Panc1 (cell line): ENCODE measurements at regions of chr18 and their contacts with region 1.

Region 1: DNA sequence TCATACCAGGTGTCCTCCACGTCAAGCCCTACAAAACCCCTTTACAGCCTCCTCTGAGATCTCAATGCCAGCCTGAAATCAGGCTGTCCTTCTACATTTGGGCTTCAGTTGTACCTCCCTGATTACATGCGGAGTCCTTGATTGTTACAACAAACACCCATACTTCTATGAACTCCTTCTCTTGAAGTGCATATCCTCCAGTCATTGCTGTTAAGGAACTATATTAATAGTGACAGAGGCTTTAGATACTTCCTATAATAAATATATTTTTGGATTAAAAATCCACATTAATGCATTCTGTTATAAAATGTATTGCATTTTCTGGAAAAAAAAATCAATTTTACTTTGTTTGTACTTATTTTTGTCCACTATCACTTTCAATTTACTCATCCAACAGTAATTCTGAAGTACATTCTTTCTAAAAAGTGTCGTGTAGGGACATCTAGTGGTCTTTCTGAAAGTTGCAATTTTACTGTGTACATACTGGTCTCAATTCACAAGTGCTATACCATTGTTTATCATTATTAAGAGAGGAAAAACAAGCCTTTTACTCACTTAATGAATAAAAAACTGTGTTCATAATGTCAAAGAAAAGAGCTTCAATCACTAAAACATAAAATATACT is 316.4 kb downstream of the DSEL start:
- DNase-seq: peak; percentile 53
- ATAC-seq: peak; percentile 83
- H3K4me3 ChIP-seq: no peak overlapping the region
- H3K27ac ChIP-seq: no peak overlapping the region
- H3K4me1 ChIP-seq: no peaks in the 10 kb centered on the region
- H3K27me3 ChIP-seq: no peaks in the 10 kb centered on the region
- CTCF ChIP-seq: peak; percentile 28; the same call in 1 of the 2 replicates

Region 2: DNA sequence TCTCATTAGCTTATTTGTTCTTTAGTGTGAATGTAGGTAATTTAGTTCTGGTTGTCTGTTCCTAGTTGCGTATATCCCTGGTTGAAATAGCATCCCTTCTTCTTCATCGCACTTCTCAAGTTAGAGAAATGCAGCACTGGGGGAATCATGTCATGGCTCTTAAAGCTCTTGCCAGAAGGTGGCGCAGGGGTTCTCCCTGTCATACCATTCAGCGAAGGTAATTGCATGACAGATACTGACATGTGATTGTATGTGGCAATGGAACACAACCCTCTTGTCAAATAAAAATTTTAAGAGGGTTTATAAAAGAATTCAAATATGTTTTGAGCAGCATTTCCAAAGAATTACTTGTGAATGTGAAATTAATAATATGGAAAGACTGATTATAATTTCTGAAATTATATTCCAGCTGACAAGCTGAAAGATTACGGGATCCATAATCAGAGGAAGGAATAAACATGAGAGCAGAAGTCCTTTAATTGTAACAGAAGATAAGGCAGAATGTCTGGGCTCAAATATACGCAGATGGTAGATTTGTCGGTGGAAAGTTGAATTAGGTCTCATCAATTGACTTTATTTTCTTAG is 95.3 kb before region 1 on chr18:
- CTCF ChIA-PET with region 1: no interaction called
- POLR2A ChIA-PET with region 1: no interaction called
- in situ Hi-C with region 1: no loop called
- intact Hi-C with region 1: loop called (anchors 1 kb)
- DNase-seq: peak; percentile 70
- ATAC-seq: peak; percentile 89
- H3K4me3 ChIP-seq: no peak overlapping the region
- H3K27ac ChIP-seq: no peak overlapping the region
- H3K4me1 ChIP-seq: no peaks in the 10 kb centered on the region
- H3K27me3 ChIP-seq: no peaks in the 10 kb centered on the region
- CTCF ChIP-seq: peak; percentile 71

Region 3: DNA sequence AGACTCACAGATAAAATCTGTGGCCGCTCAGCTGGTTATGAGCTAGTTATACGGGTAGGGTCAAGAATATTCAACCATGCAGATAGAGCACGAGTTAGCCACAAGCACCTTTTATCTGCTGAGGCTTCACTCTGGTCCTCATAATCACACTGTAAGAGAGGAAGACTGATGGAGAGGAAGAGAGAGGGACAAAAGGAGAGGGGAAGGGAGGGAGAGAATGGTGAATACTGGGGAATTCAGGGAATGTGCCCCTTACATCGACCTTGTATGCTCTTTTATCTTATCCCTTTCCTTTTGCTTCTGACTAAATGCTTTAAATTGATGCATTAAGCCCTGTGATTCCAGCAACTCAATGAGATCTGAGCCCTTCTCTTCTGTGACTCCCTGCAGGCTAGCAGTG is 16.7 kb before region 1 on chr18:
- CTCF ChIA-PET with region 1: no interaction called
- POLR2A ChIA-PET with region 1: no interaction called
- in situ Hi-C with region 1: no loop called
- intact Hi-C with region 1: no loop called
- DNase-seq: no peak
- ATAC-seq: no peak
- H3K4me3 ChIP-seq: no peak overlapping the region
- H3K27ac ChIP-seq: no peak overlapping the region
- H3K4me1 ChIP-seq: no peaks in the 10 kb centered on the region
- H3K27me3 ChIP-seq: no peaks in the 10 kb centered on the region
- CTCF ChIP-seq: no peak